Aorta (tissue), 5 donors: ENCODE measurements at regions of chr15 and their contacts with region 1.

Region 1: DNA sequence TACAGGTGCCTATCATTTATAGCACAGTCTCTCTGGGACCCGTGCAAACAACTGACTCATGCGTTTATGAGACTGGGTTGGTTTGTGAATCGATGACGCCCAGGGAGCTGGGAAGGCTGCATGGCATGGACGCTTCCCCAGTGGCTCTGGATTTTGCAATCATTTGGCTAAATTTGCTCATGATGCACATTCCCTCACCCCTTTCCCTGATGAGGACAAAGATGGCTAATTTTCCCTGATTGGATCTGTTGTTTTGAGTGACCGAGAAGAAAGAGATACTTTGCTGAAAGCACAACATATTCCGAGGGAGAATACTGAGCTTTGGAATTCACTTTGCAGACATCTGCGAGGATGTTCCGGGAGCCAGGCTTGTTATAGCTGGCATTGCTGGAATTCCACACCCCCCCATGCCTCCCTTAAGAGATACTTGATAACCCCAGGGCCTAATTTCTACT is 51.1 kb downstream of the CGNL1 start:
- DNase-seq: peak in 1 of 2 donors; percentile 59
- ATAC-seq: peak; percentile 67
- H3K4me3 ChIP-seq: no peak overlapping the region
- H3K27ac ChIP-seq: no peak overlapping the region
- H3K4me1 ChIP-seq: peaks cover 0 to 4% of the 10 kb centered on the region in 2 donors
- H3K27me3 ChIP-seq: no peaks in the 10 kb centered on the region

Region 2: GRCh38 chr15:56653787-56654186 is 773.6 kb before region 1 on chr15:
- intact Hi-C with region 1: loop called in 1 of 2 experiments (anchors 10 kb)
- DNase-seq: no peak
- ATAC-seq: no peak
- H3K4me3 ChIP-seq: no peak overlapping the region
- H3K27ac ChIP-seq: no peak overlapping the region
- H3K4me1 ChIP-seq: no peaks in the 10 kb centered on the region
- H3K27me3 ChIP-seq: no peaks in the 10 kb centered on the region

Region 3: GRCh38 chr15:57375827-57376695 is 51.3 kb before region 1 on chr15 and contains the start of gene CGNL1:
- intact Hi-C with region 1: no loop called
- DNase-seq: peak; percentile 62 to 85
- ATAC-seq: peak; percentile 86
- H3K4me3 ChIP-seq: peak within 1 kb of the TSS; percentile 81 to 94
- H3K27ac ChIP-seq: peak within 1 kb of the TSS in 1 of 2 donors; percentile 14
- H3K4me1 ChIP-seq: peaks cover 0 to 2% of the 10 kb centered on the region in 2 donors
- H3K27me3 ChIP-seq: no peaks in the 10 kb centered on the region
- total RNA-seq, gene CGNL1: 19.4 to 46.3 TPM